Naive thymus-derived CD4-positive, alpha-beta T cell (primary cell): ENCODE measurements at regions of chr22 and their contacts with region 1.

Region 1: DNA sequence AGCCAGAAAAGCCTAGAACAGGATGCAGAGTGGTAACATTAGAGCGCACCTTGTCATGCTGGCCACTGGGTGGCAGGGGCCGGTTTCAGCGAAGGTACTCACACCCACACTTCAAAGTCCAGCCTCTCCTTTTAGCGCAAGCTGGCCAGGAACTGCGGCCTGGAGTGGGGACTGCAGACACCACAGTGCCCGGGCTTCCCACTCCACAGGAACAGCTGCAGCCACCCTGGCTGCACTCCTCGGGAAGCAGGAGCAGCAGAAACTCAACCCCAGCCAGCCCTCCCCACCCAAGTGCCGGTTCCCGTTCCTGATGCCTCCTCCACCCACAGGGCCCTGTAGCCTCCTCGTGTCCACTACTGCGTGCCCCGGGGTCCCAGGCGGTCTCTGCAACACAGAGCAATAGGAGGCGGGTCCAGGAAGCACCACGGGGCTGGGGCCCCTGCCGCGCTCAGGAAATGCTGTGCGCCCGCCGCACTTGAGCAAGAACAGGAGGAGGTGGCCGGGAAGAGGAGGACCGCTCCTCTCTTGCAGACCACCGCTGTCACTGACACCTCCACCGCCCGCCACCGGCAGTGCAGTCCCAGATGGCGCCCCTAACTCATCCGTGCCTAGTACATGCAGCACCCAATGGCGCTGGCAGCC is 2.2 kb downstream of the RFPL2 start:
- DNase-seq: peak in 5 of 9 donors; percentile 7 to 24 (median 20)
- ATAC-seq: peak; percentile 43
- H3K4me3 ChIP-seq: peak overlapping the region; percentile 57
- H3K4me3 Mint-ChIP-seq: peak overlapping the region; percentile 19 to 91 (median 84)
- H3K27ac ChIP-seq: no peak overlapping the region
- H3K27ac Mint-ChIP-seq: peak overlapping the region in 3 of 9 donors; percentile 14 to 34 (median 17)
- H3K4me1 ChIP-seq: peaks cover 12 to 30% of the 10 kb centered on the region in 2 donors
- H3K4me1 Mint-ChIP-seq: peaks cover 20 to 74% (median 49%) of the 10 kb centered on the region in 7 donors
- H3K27me3 ChIP-seq: no peaks in the 10 kb centered on the region
- H3K27me3 Mint-ChIP-seq: peaks cover 0 to 21% (median 6%) of the 10 kb centered on the region in 5 donors

Region 2: GRCh38 chr22:31977141-31977841 is 225.4 kb before region 1 on chr22:
- CTCF ChIA-PET with region 1: no interaction called
- POLR2A ChIA-PET with region 1: no interaction called
- intact Hi-C with region 1: loop called (anchors 1 kb)
- DNase-seq: peak; percentile 53 to 77 (median 70)
- ATAC-seq: peak; percentile 91
- H3K4me3 ChIP-seq: no peak overlapping the region
- H3K4me3 Mint-ChIP-seq: no peak overlapping the region
- H3K27ac ChIP-seq: no peak overlapping the region
- H3K27ac Mint-ChIP-seq: peak overlapping the region in 2 of 9 donors; percentile 50 to 60
- H3K4me1 ChIP-seq: no peaks in the 10 kb centered on the region
- H3K4me1 Mint-ChIP-seq: peaks cover 0 to 7% (median 0%) of the 10 kb centered on the region in 7 donors
- H3K27me3 ChIP-seq: no peaks in the 10 kb centered on the region
- H3K27me3 Mint-ChIP-seq: peaks cover 0 to 18% (median 0%) of the 10 kb centered on the region in 5 donors

Region 3: DNA sequence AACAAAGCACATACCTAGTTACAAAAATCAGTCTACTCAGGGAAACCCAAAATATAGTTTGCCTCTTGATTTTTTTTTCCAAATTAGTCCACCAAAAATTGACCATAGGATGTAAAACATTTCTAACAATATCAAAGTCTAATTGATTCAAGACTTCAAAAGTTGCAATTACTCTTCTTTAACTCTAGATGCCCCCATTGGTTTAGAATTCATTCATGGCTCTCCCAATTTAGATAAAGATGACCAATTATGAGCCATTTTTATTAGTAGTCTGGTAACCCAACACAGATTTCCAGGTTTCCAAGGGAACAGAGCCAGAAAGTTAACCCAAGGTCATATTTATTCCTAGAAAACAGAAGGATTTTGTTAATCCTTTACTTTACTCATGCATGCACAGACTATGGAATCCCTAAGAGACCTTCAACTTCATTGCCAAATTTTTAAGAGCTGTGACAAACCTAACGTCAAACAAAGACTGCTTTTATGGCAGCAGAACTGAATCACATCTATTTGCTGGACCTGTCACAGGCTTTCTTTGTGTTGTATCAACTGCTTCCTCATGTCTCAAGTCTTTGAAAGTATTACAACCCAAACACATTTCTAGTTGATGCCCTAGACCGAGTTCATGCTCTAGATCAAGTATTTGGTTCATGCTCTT is 98.9 kb before region 1 on chr22:
- CTCF ChIA-PET with region 1: interaction called, 3 read pairs
- POLR2A ChIA-PET with region 1: no interaction called
- intact Hi-C with region 1: loop called (anchors 1 to 5 kb)
- DNase-seq: peak in 5 of 9 donors; percentile 11 to 34 (median 23)
- ATAC-seq: no peak
- H3K4me3 ChIP-seq: no peak overlapping the region
- H3K4me3 Mint-ChIP-seq: no peak overlapping the region
- H3K27ac ChIP-seq: no peak overlapping the region
- H3K27ac Mint-ChIP-seq: no peak overlapping the region
- H3K4me1 ChIP-seq: no peaks in the 10 kb centered on the region
- H3K4me1 Mint-ChIP-seq: no peaks in the 10 kb centered on the region
- H3K27me3 ChIP-seq: no peaks in the 10 kb centered on the region
- H3K27me3 Mint-ChIP-seq: peaks cover 12 to 44% (median 28%) of the 10 kb centered on the region in 5 donors

Region 4: GRCh38 chr22:32144496-32145274 is 58.0 kb before region 1 on chr22:
- CTCF ChIA-PET with region 1: no interaction called
- POLR2A ChIA-PET with region 1: interaction called, 3 read pairs
- intact Hi-C with region 1: loop called (anchors 2 to 5 kb)
- DNase-seq: peak in 6 of 9 donors; percentile 16 to 62 (median 36)
- ATAC-seq: peak; percentile 83
- H3K4me3 ChIP-seq: no peak overlapping the region
- H3K4me3 Mint-ChIP-seq: peak overlapping the region in 7 of 10 donors; percentile 1 to 61 (median 26)
- H3K27ac ChIP-seq: no peak overlapping the region
- H3K27ac Mint-ChIP-seq: peak overlapping the region; percentile 1 to 90 (median 40)
- H3K4me1 ChIP-seq: peaks cover 0 to 8% of the 10 kb centered on the region in 2 donors
- H3K4me1 Mint-ChIP-seq: peaks cover 22 to 52% (median 36%) of the 10 kb centered on the region in 7 donors
- H3K27me3 ChIP-seq: no peaks in the 10 kb centered on the region
- H3K27me3 Mint-ChIP-seq: peaks cover 0 to 4% (median 0%) of the 10 kb centered on the region in 5 donors

Region 5: DNA sequence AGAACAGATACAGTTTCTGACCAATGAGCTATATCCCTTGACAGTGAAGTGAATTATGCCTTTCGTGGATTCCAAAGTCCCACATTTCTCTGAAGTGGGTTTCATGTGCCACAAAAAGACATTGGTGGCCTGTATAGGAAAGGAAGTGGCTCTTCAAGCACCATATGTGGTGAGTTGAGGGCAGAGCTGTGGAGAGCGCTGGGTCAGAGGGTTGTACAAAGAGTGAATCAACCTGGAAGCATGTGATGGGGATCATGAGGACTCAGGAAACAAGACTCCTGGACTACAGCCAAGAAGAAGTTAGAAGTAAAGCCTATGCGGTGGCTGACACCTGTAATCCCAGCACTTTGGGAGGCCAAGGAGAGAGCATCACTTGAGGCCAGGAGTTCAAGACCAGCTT is 53.1 kb after region 1 on chr22:
- CTCF ChIA-PET with region 1: no interaction called
- POLR2A ChIA-PET with region 1: no interaction called
- intact Hi-C with region 1: no loop called
- DNase-seq: no peak
- ATAC-seq: no peak
- H3K4me3 ChIP-seq: no peak overlapping the region
- H3K4me3 Mint-ChIP-seq: no peak overlapping the region
- H3K27ac ChIP-seq: no peak overlapping the region
- H3K27ac Mint-ChIP-seq: no peak overlapping the region
- H3K4me1 ChIP-seq: no peaks in the 10 kb centered on the region
- H3K4me1 Mint-ChIP-seq: peaks cover 0 to 6% (median 0%) of the 10 kb centered on the region in 7 donors
- H3K27me3 ChIP-seq: no peaks in the 10 kb centered on the region
- H3K27me3 Mint-ChIP-seq: peaks cover 17 to 45% (median 30%) of the 10 kb centered on the region in 5 donors

Region 6: DNA sequence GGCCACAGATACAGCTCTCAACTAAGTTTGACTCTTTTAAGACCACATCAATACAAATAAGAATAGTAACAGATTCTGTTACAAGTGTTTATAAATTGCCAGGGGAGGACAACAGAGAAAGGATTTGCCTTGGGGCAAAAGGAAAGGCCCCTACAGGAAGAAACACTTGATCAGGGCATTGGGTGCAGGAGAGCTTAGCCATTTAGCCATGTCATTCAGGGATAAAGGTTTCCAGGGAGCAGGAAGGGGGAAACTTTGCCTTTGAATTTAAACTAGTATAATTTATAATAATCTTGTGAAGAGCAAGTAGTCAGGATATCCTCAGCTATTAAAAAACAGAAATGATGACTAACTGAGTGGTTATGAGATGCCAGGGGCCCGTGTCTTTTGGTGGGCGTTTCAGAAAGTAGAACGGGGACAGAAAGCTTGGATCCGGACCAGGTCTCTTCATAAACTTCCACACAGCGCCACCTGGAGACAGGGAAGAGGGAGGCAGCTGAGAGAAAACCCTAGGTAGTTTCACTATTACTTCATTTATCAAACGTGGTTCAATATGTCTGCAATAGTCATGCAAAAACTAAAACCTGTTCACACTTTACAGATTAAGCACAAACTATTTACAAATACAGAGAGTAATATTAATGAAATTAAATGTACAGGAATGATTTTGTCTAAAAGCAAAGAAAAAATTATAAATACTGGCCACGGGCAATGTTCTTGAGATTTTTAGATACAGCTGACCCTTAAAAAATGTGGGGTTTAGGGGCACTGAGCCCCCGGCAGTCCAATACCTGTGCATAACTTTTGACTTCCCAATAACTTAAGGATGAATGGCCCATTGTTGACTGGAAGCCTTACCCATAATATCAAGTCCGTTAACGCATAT is 63.5 kb after region 1 on chr22:
- CTCF ChIA-PET with region 1: no interaction called
- POLR2A ChIA-PET with region 1: no interaction called
- intact Hi-C with region 1: loop called in 1 of 2 experiments (anchors 1 kb)
- DNase-seq: peak; percentile 11 to 66 (median 56)
- ATAC-seq: peak; percentile 75
- H3K4me3 ChIP-seq: no peak overlapping the region
- H3K4me3 Mint-ChIP-seq: peak overlapping the region in 6 of 10 donors; percentile 8 to 55 (median 30)
- H3K27ac ChIP-seq: no peak overlapping the region
- H3K27ac Mint-ChIP-seq: peak overlapping the region in 1 of 9 donors; percentile 28
- H3K4me1 ChIP-seq: no peaks in the 10 kb centered on the region
- H3K4me1 Mint-ChIP-seq: peaks cover 0 to 11% (median 7%) of the 10 kb centered on the region in 7 donors
- H3K27me3 ChIP-seq: no peaks in the 10 kb centered on the region
- H3K27me3 Mint-ChIP-seq: peaks cover 2 to 8% (median 6%) of the 10 kb centered on the region in 5 donors

Region 7: DNA sequence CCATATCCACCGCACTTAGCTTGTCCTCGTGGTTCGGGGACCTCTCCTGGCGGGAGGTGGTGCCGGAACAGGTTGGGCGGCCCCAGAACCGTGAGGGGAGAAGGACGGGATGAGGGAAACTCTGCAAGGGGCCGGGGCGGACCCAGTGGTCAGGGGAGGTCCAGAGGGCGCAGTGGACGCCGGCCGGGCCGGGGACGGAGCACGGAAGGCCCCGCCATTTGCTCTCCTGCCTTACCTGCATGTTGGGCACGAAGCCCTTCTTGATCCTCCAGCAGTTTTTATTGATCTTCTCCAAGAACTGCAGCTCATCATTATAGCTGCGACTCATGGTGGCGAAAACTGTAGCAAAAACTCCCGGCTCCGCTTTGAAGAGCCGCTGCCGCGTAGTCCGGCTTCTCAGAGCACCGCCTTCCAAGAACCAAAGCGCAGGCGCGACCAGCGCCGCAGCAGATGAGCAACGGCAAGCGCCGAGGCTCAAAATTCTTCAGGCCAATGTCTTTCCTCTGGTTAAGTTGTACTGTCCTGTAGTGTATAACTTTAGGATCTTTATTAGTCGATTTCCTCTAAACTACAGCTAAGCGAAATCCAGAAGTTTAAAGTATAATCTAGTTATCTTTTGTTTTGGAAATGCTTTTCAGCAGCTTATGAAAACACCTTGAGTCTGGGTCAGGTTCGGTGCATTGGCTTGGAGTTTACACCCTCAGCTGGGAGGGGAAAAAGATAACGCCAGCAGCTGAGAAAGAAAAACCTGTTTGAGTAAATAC is 209.4 kb after region 1 on chr22 and contains the start of gene RTCB:
- CTCF ChIA-PET with region 1: no interaction called
- POLR2A ChIA-PET with region 1: no interaction called
- intact Hi-C with region 1: loop called in 1 of 2 experiments (anchors 10 kb)
- DNase-seq: peak; percentile 86 to 93 (median 90)
- ATAC-seq: peak; percentile 94
- H3K4me3 ChIP-seq: peak within 1 kb of the TSS; percentile 89
- H3K4me3 Mint-ChIP-seq: peak within 1 kb of the TSS; percentile 96 to 99 (median 98)
- H3K27ac ChIP-seq: peak within 1 kb of the TSS; percentile 92
- H3K27ac Mint-ChIP-seq: peak within 1 kb of the TSS; percentile 90 to 98 (median 96)
- H3K4me1 ChIP-seq: peaks cover 12 to 14% of the 10 kb centered on the region in 2 donors
- H3K4me1 Mint-ChIP-seq: peaks cover 22 to 62% (median 58%) of the 10 kb centered on the region in 7 donors
- H3K27me3 ChIP-seq: no peaks in the 10 kb centered on the region
- H3K27me3 Mint-ChIP-seq: peaks cover 0 to 11% (median 0%) of the 10 kb centered on the region in 5 donors
- total RNA-seq, gene RTCB: 41.6 to 59.7 (median 54.6) TPM